ENCODE measurements at regions of chr3 and their contacts with region 1.

Region 1: DNA sequence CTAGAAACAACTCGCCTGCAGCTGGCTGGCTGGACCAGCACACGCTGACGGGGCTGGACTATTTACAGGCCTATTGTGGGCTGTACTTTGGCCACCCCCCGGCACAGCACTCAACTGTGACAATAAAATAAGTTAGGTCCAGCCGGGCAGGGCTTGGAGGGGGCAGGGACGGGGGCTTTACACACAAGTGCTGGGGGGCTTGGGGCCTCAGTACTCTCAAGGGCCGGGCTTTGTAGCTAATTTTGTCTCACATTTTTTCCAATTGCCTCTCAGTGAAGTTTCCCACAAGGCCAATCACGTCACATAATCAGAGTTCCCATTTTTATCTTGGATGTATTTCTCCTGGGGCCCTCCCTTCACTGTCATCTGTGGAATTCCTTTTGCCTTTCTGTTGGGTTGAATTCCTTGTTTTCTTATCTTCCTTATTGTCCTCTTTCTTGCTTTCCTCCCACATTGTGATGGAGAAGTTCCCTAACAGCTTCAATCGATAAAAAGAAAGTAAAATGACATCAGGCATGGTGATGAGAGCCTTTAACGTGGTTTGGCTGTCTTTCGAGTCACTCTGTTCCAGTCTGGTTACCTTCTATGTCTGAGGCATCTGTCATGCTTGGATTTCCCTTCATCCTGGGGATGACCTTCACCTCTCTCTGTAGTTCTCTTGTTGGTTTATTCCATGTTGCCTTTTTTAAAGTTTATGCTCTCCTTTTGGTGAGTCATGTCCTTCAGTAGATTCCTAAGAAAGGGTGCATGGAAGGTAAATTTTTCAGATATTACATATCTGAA is 44.1 kb upstream of the CMTM7 start:
- DNase-seq: no peak
- ATAC-seq: no peak; the same call in 1 of the 2 replicates
- H3K4me3 ChIP-seq: no peak overlapping the region
- H3K27ac ChIP-seq: no peak overlapping the region
- H3K4me1 ChIP-seq: no peaks in the 10 kb centered on the region
- H3K27me3 ChIP-seq: peaks cover 8% of the 10 kb centered on the region
- CTCF ChIP-seq: no peak
- POLR2A ChIP-seq: no peak
- RAD21 ChIP-seq: no peak

Region 2: GRCh38 chr3:32334675-32335074 is 12.9 kb before region 1 on chr3:
- CTCF ChIA-PET with region 1: interaction called, 10 read pairs
- POLR2A ChIA-PET with region 1: interaction called, 3 read pairs
- dilution Hi-C with region 1: no loop called
- in situ Hi-C with region 1: no loop called
- intact Hi-C with region 1: no loop called
- DNase-seq: no peak
- ATAC-seq: no peak
- H3K4me3 ChIP-seq: no peak overlapping the region
- H3K27ac ChIP-seq: no peak overlapping the region
- H3K4me1 ChIP-seq: no peaks in the 10 kb centered on the region
- H3K27me3 ChIP-seq: peaks cover 8% of the 10 kb centered on the region
- CTCF ChIP-seq: no peak
- POLR2A ChIP-seq: no peak
- RAD21 ChIP-seq: no peak

Region 3: GRCh38 chr3:32391643-32392535 is 44.4 kb after region 1 on chr3 and contains the start of gene CMTM7:
- CTCF ChIA-PET with region 1: no interaction called
- POLR2A ChIA-PET with region 1: no interaction called
- dilution Hi-C with region 1: no loop called
- in situ Hi-C with region 1: no loop called
- intact Hi-C with region 1: no loop called
- DNase-seq: peak; percentile 35
- ATAC-seq: peak; percentile 88
- H3K4me3 ChIP-seq: peak within 1 kb of the TSS; percentile 90
- H3K27ac ChIP-seq: peak within 1 kb of the TSS; percentile 76
- H3K4me1 ChIP-seq: peaks cover 2% of the 10 kb centered on the region; the same call in 1 of the 2 replicates
- H3K27me3 ChIP-seq: no peaks in the 10 kb centered on the region; the same call in 1 of the 2 replicates
- CTCF ChIP-seq: no peak
- POLR2A ChIP-seq: peak; percentile 39; the same call in 1 of the 2 replicates
- RAD21 ChIP-seq: no peak; the same call in 1 of the 2 replicates
- total RNA-seq, gene CMTM7: 3.4 and 3.9 TPM in 2 replicates

Measured in IMR-90 (cell line).